ENCODE measurements at regions of chr1 and their contacts with region 1.

Region 1: DNA sequence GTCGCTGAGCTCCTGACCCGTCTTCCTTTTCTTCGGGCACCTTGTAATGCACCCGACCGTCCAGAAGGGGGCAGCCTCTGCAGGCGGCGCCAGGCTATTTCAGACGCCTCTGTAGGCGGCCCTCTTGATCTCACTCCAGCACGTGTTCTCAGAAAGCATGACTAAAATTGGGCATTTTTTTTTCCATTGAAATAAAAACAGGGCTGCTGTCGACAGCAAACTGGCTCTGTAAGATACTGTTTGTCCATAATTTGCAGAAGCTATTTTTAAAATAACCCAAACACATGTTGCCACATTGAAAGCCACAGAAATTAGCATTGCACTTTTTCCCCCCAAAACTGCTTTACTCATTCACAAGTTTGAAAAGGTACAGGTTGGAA is 78.0 kb downstream of the STUM start:
- DNase-seq: peak; percentile 91

Region 2: DNA sequence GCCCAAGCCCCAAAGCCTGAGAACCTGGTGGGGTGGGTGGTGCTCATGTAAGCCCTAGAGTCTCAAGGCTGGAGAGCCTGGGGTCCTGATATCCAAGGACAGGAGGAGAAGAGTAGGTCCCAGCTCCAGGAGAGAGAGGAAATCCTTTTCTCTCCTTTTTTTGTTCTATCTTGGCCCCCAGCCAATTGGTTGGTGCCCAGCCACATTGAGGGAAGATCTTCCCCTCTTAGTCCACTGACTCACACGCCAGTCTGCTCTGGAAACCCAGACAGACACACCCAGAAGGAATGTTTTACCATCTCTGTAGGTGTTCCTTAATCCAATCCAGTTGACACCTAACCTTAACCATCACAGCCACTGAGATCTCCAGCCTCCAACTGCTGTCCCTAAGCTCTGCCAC is 301.4 kb before region 1 on chr1:
- CTCF ChIA-PET with region 1: no interaction called
- POLR2A ChIA-PET with region 1: no interaction called
- DNase-seq: no peak

Region 3: DNA sequence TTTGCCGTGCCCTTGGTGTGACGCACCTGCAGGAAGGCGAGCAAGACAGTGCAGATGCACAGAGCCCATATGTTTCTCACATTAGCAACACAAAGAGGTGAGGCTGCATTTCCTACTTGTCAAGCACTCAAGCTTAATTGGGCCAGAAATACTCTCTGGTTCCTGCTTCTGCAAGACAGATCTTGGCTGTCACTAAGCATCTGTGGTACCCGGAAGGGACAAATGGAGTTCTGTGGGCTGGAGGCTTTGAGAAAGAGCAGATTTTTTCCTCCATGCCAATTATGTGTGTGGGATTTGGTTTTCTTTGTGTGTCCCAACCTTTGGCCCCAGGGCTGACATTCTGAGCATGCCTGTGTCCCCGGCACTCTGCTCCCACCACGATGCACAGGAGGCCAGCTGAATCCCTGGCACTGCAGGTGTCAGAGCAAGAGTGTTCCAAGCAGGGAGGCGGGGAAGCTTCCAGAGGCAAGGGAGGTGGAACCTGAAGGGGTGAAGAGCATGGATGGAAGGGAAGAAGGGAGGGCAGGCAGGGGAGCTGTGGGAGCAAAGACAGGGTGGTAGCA is 130.0 kb before region 1 on chr1:
- CTCF ChIA-PET with region 1: no interaction called
- POLR2A ChIA-PET with region 1: no interaction called
- DNase-seq: no peak

Region 4: DNA sequence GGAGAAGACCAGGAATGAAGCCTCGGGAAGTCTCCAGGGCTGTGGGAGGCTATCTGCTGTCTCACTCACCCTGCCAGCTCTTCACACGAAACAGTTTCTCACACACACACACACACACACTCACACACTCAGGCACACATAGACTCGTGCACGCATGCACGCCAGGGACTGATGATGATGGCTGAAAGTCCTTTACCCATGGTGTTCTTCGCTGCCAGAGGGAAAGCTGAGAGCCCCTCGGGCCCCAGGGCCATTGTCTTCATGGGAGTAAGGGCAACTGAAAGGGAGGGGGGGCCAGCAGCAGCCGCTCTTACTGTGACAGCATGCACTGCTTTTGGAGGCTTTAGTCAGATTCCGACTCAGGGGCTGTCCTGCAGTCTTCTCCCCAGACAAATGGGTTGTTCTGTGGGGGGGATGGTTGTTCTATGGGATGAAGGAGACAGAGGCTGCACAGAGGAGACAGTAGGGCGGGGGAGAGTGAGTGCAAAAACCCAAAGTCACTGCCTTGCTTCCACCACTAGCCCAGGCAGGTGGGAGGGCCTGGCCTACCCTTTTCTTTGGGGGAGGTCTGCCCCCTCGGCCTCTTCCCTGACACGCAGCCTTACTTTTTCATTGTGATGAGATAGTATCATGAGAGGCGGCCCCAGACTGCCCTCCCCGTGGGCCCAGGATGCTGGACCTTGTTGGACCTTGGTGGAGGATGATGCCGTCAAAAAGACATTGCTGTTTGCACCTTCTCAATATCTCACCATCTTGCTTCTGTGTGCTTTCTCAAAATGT is 49.0 kb before region 1 on chr1:
- CTCF ChIA-PET with region 1: no interaction called
- POLR2A ChIA-PET with region 1: no interaction called
- DNase-seq: no peak

Region 5: GRCh38 chr1:226640296-226640695 is 13.7 kb after region 1 on chr1:
- CTCF ChIA-PET with region 1: interaction called, 11 read pairs
- POLR2A ChIA-PET with region 1: no interaction called
- DNase-seq: no peak